Lower leg skin (tissue), 4 donors: ENCODE measurements at regions of chr6 and their contacts with region 1.

Region 1: GRCh38 chr6:1396952-1397868 is 7.8 kb downstream of the FOXF2 start:
- DNase-seq: peak; percentile 49 to 92
- H3K4me3 ChIP-seq: no peak overlapping the region
- CTCF ChIP-seq: no peak
- POLR2A ChIP-seq: no peak

Region 2: GRCh38 chr6:593139-593906 is 803.9 kb before region 1 on chr6:
- intact Hi-C with region 1: loop called (anchors 10 kb)
- DNase-seq: peak in 1 of 2 donors; percentile 58
- H3K4me3 ChIP-seq: no peak overlapping the region
- CTCF ChIP-seq: no peak
- POLR2A ChIP-seq: no peak

Region 3: GRCh38 chr6:1436334-1437306 is 39.4 kb after region 1 on chr6:
- intact Hi-C with region 1: loop called (anchors 2 kb)
- DNase-seq: peak in 1 of 2 donors; percentile 54
- H3K4me3 ChIP-seq: no peak overlapping the region
- CTCF ChIP-seq: peak in 1 of 3 donors; percentile 13
- POLR2A ChIP-seq: no peak